Upper lobe of right lung (tissue), 1 donor: ENCODE measurements at regions of chr17 and their contacts with region 1.

Region 1: DNA sequence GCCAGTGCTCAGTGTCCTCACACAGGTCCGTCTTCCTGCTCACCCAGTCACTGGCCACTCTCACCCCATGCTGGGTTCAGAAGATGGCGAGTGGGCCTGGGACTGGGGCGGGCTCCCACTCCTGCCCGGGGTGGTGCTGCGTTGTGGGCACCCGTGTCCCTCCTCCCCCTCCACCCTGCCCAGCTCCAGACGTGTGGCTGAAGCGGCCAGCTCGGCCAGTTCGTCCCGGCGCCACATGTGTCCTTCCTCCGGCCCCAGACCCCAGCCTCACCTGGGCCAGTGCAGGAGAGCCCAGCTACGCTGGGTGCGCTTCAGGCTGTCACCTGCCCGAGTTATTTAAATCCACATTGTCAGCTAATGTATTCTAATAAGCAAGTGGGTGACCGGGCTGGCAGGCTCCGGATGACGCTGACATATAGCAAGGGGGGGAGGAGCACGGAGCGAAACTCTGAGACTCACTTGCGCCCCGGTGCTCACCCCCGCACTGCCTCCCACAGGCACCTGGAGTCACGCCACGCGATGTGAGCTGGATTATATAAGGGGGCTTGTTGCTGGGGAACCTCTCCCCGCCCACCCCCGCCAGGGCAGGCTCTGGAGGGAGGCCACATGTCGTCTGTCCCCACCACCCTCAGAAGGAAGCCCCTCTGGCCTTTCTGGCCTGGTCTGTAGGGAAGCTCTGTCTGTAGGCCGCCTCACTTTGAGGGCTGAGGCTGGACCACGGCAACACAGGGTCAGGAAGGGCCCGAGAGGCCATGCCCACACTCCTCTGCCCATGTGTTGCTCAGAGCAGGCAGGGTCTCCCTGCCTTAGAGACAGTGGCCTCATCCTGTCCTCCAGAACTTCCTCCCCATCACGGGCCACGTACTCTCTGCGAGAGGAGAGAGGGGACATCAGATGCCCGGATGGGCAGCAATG is 7.1 kb upstream of the BAIAP2 start:
- DNase-seq: peak; percentile 70
- ATAC-seq: no peak
- H3K4me3 ChIP-seq: no peak overlapping the region
- H3K27ac ChIP-seq: no peak overlapping the region
- H3K4me1 ChIP-seq: peaks cover 61% of the 10 kb centered on the region
- H3K27me3 ChIP-seq: no peaks in the 10 kb centered on the region
- CTCF ChIP-seq: no peak

Region 2: GRCh38 chr17:80599546-80600305 is 428.1 kb before region 1 on chr17:
- intact Hi-C with region 1: no loop called
- DNase-seq: no peak
- ATAC-seq: peak; percentile 43
- H3K4me3 ChIP-seq: no peak overlapping the region
- H3K27ac ChIP-seq: no peak overlapping the region
- H3K4me1 ChIP-seq: peaks cover 12% of the 10 kb centered on the region
- H3K27me3 ChIP-seq: no peaks in the 10 kb centered on the region
- CTCF ChIP-seq: no peak

Region 3: GRCh38 chr17:81094509-81095382 is 66.9 kb after region 1 on chr17:
- intact Hi-C with region 1: loop called (anchors 5 kb)
- DNase-seq: no peak
- ATAC-seq: no peak
- H3K4me3 ChIP-seq: no peak overlapping the region
- H3K27ac ChIP-seq: peak overlapping the region; percentile 42
- H3K4me1 ChIP-seq: peaks cover 58% of the 10 kb centered on the region
- H3K27me3 ChIP-seq: no peaks in the 10 kb centered on the region
- CTCF ChIP-seq: no peak

Region 4: DNA sequence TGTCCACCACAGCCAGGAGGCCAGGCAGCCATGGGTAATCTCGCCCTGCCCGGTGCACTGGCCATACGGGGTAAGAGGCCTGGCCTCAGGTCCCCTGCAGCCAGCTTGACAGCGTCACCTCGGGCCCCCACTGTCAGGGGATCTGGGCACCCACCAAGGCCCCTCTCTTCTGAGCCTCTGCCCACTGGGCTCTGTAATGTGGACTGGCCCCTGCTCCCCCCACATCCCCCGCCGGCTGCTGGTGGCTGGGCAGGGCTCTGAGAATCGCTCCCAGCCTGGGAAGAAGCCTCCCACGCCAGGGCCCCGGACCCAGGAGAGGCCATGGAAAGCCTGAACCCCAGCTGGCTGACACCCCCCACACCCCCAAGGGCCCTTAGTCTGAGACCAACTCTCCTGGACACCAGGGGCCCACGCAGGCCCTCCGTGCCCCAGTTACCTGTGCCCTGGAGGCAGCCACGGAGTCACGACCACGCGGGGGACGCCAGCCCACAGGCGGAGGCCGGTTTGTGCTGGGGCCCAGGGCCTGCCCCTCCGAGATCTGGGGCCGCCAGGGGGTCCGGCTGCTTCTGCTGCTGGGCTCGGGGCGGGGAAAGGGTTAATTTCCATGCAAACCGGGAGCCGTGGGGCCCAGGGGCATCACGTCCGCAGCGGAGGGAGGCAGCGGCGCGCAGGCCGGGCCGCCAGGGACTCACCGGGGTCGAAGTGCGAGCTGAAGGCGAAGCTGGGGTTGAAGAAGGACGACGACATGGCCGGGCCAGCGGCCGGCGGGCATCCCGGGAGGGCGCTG is 137.6 kb after region 1 on chr17 and contains the start of gene PVALEF:
- intact Hi-C with region 1: no loop called
- DNase-seq: no peak
- ATAC-seq: no peak
- H3K4me3 ChIP-seq: peak within 1 kb of the TSS; percentile 14
- H3K27ac ChIP-seq: no peak within 1 kb of the TSS
- H3K4me1 ChIP-seq: peaks cover 9% of the 10 kb centered on the region
- H3K27me3 ChIP-seq: peaks cover 15% of the 10 kb centered on the region
- CTCF ChIP-seq: no peak
- total RNA-seq, gene PVALEF: not detected